ENCODE measurements at regions of chr9 and their contacts with region 1.

Region 1: DNA sequence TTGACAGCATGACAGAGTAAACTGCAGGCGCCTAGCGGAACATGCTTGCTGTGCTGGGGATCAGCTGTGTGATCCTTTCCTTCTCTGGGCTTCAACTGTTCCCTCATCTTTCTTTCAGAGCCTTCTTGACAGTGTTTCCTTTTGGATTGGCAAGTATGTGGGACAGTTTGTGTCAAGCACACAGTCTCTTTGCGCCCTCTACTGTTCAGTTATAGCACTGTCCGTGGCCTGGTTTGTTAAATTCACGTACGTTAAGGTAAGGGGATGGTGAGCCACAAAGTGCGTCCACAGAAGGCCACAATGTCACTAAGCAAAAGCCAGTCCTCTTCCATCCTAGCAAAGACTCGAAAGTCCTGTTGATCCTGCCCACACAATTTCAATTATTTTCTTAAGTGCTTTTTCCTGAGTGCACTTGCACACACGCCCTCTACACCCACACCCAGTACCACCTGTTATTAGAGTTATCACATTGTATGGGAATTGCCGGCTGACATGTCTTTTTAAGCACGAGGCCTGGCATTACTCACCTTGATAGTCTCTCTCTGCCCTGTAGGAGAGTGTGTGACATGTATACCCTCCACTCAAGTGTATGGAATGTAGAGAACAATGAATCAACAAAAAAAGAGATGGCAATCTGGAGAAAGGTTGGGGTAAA is 22.5 kb upstream of the PTPN3 start:
- DNase-seq: peak; percentile 81 to 87 (median 84)
- ATAC-seq: peak; percentile 90
- H3K4me3 ChIP-seq: no peak overlapping the region
- H3K27ac ChIP-seq: no peak overlapping the region
- H3K4me1 ChIP-seq: peaks cover 16% of the 10 kb centered on the region
- H3K27me3 ChIP-seq: no peaks in the 10 kb centered on the region
- CTCF ChIP-seq: peak; percentile 80 to 97 (median 95)
- POLR2A ChIP-seq: no peak

Region 2: DNA sequence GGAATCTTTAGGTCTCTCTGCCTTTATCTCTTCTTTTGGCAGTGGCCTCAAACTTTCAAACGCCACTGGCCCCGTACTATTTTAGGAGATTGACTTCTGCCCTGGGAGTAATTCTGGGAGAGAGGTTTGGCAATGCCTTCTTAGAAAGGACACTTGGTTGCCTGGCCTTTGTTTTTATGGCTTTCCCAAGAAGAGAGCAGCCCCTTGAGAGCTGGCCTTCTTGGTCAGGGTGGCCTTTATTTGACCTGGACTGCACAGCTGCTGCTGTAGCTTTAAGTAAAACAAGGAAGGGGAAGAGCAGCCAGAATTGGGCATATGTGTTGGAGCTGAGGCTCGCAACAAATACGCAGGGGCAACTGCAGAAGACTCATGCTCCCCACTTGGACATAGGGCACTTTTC is 83.3 kb before region 1 on chr9:
- intact Hi-C with region 1: loop called (anchors 5 kb)
- DNase-seq: no peak
- ATAC-seq: no peak
- H3K4me3 ChIP-seq: no peak overlapping the region
- H3K27ac ChIP-seq: no peak overlapping the region
- H3K4me1 ChIP-seq: peaks cover 25% of the 10 kb centered on the region
- H3K27me3 ChIP-seq: no peaks in the 10 kb centered on the region
- CTCF ChIP-seq: no peak
- POLR2A ChIP-seq: no peak

Region 3: DNA sequence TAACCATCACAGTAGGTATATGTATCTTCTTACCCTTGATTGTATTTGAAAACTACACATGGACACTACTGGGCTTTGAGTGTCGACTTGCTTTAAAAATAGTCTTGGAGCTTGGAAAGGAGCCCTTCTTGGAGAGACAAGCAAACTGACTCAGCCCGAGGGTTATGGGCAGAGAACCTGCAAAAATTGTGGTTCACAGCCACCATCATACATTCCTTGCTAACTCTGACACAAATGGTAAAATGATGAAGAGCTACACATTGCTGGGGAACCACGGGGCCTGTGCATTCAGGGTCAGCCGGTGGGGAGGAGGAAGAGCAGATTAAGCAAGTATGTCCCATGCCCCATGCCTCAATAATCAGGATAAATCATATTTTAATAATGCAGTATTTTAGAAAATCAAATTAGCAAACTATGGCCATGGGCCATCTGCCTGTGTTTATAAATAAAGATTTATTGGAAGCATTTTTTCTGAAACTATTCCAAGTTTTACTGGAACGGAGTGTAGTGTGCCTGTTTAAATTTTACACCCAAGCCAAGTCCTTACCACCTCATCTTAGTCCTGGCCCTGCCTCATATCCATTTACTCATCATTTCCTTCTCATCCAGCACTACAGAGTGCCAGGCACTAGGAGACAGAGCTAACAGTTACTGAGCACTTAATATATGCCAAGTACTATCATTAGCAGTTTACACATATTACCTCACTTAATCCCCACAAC is 455.1 kb after region 1 on chr9:
- intact Hi-C with region 1: no loop called
- DNase-seq: no peak
- ATAC-seq: no peak
- H3K4me3 ChIP-seq: no peak overlapping the region
- H3K27ac ChIP-seq: no peak overlapping the region
- H3K4me1 ChIP-seq: no peaks in the 10 kb centered on the region
- H3K27me3 ChIP-seq: no peaks in the 10 kb centered on the region
- CTCF ChIP-seq: no peak
- POLR2A ChIP-seq: no peak

Measured in body of pancreas (tissue), 4 donors.